Mucosa of descending colon (tissue), 3 donors: ENCODE measurements at regions of chr15 and their contacts with region 1.

Region 1: GRCh38 chr15:26201177-26201858 is 338.2 kb upstream of the ATP10A start:
- DNase-seq: no peak
- ATAC-seq: no peak
- H3K4me3 ChIP-seq: no peak overlapping the region
- H3K4me1 ChIP-seq: no peaks in the 10 kb centered on the region
- CTCF ChIP-seq: no peak

Region 2: DNA sequence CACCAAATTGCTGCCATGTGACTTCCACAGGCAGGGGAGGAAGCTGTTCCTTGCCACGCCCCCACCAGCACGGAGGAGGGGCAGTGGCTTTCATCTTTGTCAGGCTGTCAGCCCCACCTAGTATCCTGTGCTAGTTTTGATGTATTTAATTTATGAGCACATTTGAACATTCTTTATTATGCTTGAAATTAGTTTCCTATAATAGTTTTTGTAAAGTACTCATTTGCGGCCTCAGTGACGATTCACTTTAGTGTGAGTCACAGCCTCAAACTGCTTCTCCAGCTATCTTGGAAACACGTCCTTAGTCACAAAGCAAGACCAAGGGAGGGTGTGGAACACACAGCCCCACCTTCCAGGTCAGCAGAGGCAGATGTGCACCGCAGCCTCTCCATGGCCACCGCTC is 98.3 kb before region 1 on chr15:
- intact Hi-C with region 1: no loop called
- DNase-seq: no peak
- ATAC-seq: no peak
- H3K4me3 ChIP-seq: no peak overlapping the region
- H3K4me1 ChIP-seq: no peaks in the 10 kb centered on the region
- CTCF ChIP-seq: no peak

Region 3: DNA sequence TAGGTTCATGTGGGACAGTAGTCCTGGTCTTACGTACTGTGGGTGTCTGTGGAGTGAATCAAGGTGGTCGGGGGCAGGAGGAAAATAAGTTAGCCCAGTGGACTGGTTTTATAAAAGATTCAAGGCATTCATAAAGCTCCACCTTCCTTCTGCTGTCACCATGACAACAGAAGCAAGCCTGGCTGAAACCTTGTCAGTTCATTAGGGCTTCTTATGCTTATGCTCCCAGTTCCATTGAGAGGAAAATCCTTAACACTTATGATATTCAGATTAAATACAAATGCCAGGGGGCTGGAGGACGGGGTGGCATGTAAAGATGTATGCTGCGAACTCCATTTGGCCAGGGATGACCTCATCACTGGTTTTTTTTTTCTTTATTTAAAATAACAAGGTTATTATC is 55.1 kb before region 1 on chr15:
- intact Hi-C with region 1: loop called in 1 of 2 experiments (anchors 10 kb)
- DNase-seq: no peak
- ATAC-seq: no peak
- H3K4me3 ChIP-seq: no peak overlapping the region
- H3K4me1 ChIP-seq: no peaks in the 10 kb centered on the region
- CTCF ChIP-seq: no peak